ENCODE measurements at regions of chr16 and their contacts with region 1.

Region 1: GRCh38 chr16:4586291-4586690 is 28.4 kb downstream of the UBALD1 start:
- DNase-seq: no peak
- H3K4me3 ChIP-seq: no peak overlapping the region
- H3K4me1 ChIP-seq: no peaks in the 10 kb centered on the region
- H3K27me3 ChIP-seq: peaks cover 6% of the 10 kb centered on the region; the same call in 1 of the 2 replicates

Region 2: GRCh38 chr16:4517812-4518680 is 68.2 kb before region 1 on chr16:
- in situ Hi-C with region 1: loop called (anchors 5 kb)
- DNase-seq: peak; percentile 27 to 65
- H3K4me3 ChIP-seq: no peak overlapping the region
- H3K4me1 ChIP-seq: no peaks in the 10 kb centered on the region; the same call in 1 of the 2 replicates
- H3K27me3 ChIP-seq: no peaks in the 10 kb centered on the region

Region 3: DNA sequence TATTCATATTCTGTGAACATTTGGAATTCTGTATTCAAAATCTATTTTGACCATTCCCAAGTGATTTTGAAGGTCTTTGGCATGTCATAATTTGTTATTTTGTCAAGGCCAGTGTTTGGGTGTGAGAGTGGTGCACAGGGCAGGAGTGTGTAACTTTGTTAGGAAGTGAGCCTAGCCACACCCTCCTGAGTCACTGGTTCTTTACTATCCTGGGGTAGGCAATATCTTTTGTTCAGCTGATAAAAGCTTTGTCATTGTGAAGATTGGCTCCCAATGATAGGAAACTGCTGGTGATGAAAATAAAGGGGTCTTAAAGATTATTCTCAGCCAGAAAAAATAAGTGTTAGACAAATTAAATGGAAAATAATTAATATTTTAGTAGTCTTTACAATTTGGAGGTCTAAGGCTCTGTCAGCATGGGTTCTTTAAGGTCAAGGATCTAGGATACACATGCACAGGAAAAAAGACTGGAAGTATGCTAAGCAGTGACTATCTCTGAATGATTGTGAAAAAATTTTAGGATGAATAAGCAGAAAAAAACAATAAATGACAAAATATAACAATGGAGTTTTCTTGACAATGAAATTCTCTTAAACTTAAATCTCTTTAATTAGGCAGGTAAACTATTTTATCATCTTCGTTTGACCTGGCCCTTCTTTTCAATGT is 266.0 kb after region 1 on chr16:
- in situ Hi-C with region 1: no loop called
- DNase-seq: peak in 1 of 2 experiments; percentile 19
- H3K4me3 ChIP-seq: no peak overlapping the region
- H3K4me1 ChIP-seq: peaks cover 19% of the 10 kb centered on the region
- H3K27me3 ChIP-seq: no peaks in the 10 kb centered on the region